ENCODE measurements at regions of chr3 and their contacts with region 1.

Region 1: GRCh38 chr3:128383316-128384235 is 83.1 kb downstream of the DNAJB8 start:
- DNase-seq: peak; percentile 86
- ATAC-seq: peak; percentile 34

Region 2: DNA sequence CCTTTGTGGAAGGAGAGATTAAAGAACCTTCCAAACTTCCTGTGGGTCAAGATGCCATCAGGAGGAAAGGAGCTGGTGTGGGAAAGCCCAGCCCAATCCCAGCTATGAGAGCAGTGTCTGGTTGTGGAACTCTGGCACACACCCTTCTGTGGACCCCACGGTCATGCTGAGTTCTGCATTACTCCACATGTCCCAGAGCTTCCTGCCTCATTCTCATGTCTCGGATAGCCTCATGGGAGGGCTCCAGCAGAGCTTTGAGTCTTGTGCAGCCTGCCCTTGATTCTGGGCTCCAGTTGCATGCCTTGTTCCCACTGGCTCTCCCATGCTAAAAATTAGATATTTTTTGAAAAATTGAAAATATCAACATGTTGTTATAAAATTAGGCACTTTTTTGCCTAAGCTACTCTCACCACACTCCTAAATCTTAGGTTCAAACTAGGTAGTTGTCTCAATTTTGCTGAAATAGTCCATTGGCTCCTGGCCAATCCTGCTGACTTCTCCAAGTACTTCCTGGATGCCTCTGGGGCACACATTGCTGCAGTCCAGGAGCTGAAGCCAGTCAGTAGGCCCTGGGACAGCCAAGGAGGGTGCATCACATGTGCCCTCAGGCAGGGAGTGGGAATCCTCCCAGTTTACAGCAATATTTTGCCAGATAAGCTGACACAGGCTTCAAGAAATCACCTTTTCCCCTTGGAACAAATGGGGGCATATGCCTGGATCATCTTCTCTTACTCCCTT is 86.0 kb before region 1 on chr3:
- intact Hi-C with region 1: loop called (anchors 5 kb)
- DNase-seq: no peak
- ATAC-seq: peak; percentile 51